SK-N-SH (cell line): ENCODE measurements at regions of chr5 and their contacts with region 1.

Region 1: GRCh38 chr5:93607367-93608258 is 24.6 kb downstream of the NR2F1 start:
- DNase-seq: peak; percentile 64
- H3K4me3 ChIP-seq: peak overlapping the region in 1 of 2 experiments; percentile 26; a peak in 2 of 4 replicates
- H3K27ac ChIP-seq: peak overlapping the region in 1 of 2 experiments; percentile 48; a peak in 2 of 4 replicates
- H3K4me1 ChIP-seq: peaks cover 0 to 14% of the 10 kb centered on the region in 2 experiments; a peak in 3 of 4 replicates
- H3K27me3 ChIP-seq: peaks cover 6% of the 10 kb centered on the region
- CTCF ChIP-seq: peak; percentile 71
- EP300 ChIP-seq: no peak
- RAD21 ChIP-seq: peak; percentile 85

Region 2: GRCh38 chr5:93257616-93258015 is 350.0 kb before region 1 on chr5:
- CTCF ChIA-PET with region 1: no interaction called
- POLR2A ChIA-PET with region 1: no interaction called
- DNase-seq: no peak
- H3K4me3 ChIP-seq: no peak overlapping the region
- H3K27ac ChIP-seq: no peak overlapping the region
- H3K4me1 ChIP-seq: no peaks in the 10 kb centered on the region; a peak in 1 of 4 replicates
- H3K27me3 ChIP-seq: no peaks in the 10 kb centered on the region
- CTCF ChIP-seq: no peak
- EP300 ChIP-seq: no peak
- RAD21 ChIP-seq: no peak

Region 3: DNA sequence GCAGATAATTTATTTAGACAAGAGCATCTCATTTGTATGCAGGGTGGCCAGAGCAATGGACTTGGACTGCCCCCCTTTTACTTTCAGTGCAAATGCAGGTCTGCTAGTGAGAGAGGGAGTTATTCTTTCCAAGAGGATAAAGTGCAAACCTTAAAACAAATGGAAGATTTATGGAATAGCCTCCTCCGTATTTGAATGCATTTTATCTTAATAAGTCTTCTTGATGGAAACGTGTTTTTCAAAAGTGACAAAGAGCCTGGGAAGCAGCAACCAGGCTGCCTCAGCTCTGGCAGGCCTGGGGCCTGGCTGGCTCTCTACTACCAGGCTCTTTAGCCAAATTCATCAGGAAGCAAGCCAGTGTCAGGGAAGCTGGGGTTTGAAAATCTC is 17.8 kb before region 1 on chr5:
- CTCF ChIA-PET with region 1: interaction called, 32 read pairs
- POLR2A ChIA-PET with region 1: interaction called, 4 read pairs
- DNase-seq: peak; percentile 59
- H3K4me3 ChIP-seq: peak overlapping the region in 1 of 2 experiments; percentile 34; a peak in 1 of 4 replicates
- H3K27ac ChIP-seq: peak overlapping the region; percentile 27 to 67; a peak in 3 of 4 replicates
- H3K4me1 ChIP-seq: peaks cover 0 to 24% of the 10 kb centered on the region in 2 experiments; a peak in 3 of 4 replicates
- H3K27me3 ChIP-seq: no peaks in the 10 kb centered on the region
- CTCF ChIP-seq: peak; percentile 25
- EP300 ChIP-seq: no peak
- RAD21 ChIP-seq: peak; percentile 41; the same call in 1 of the 2 replicates

Region 4: GRCh38 chr5:93644760-93645159 is 37.1 kb after region 1 on chr5:
- CTCF ChIA-PET with region 1: no interaction called
- POLR2A ChIA-PET with region 1: no interaction called
- DNase-seq: no peak
- H3K4me3 ChIP-seq: no peak overlapping the region
- H3K27ac ChIP-seq: no peak overlapping the region
- H3K4me1 ChIP-seq: no peaks in the 10 kb centered on the region; a peak in 1 of 4 replicates
- H3K27me3 ChIP-seq: no peaks in the 10 kb centered on the region
- CTCF ChIP-seq: no peak
- EP300 ChIP-seq: no peak
- RAD21 ChIP-seq: no peak

Region 5: DNA sequence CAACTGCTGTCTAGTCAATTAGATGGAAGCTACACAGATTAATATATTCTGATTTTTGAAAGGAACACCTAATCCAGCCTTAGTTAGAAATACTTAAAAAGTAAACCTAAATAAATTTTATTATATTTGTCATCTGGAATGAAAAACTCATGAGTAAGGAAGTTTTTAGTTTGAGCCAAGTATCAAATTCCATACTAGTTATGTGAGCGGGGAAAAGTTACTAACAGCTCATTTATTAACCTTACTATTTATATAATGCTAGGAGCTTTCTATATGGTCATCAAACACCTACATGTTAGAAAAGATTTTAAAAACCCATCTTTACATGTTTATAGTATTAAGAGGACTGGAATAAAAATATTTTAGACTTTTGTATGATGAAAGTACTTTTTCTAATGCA is 175.4 kb after region 1 on chr5:
- CTCF ChIA-PET with region 1: interaction called, 11 read pairs
- POLR2A ChIA-PET with region 1: no interaction called
- DNase-seq: no peak
- H3K4me3 ChIP-seq: no peak overlapping the region
- H3K27ac ChIP-seq: no peak overlapping the region
- H3K4me1 ChIP-seq: no peaks in the 10 kb centered on the region; a peak in 1 of 4 replicates
- H3K27me3 ChIP-seq: no peaks in the 10 kb centered on the region
- CTCF ChIP-seq: no peak
- EP300 ChIP-seq: no peak
- RAD21 ChIP-seq: no peak

Region 6: GRCh38 chr5:94849821-94850736 is 1242.5 kb after region 1 on chr5:
- CTCF ChIA-PET with region 1: interaction called, 10 read pairs
- POLR2A ChIA-PET with region 1: no interaction called
- DNase-seq: peak; percentile 39
- H3K4me3 ChIP-seq: no peak overlapping the region
- H3K27ac ChIP-seq: no peak overlapping the region
- H3K4me1 ChIP-seq: peaks cover 0 to 2% of the 10 kb centered on the region in 2 experiments; a peak in 2 of 4 replicates
- H3K27me3 ChIP-seq: no peaks in the 10 kb centered on the region
- CTCF ChIP-seq: peak; percentile 77
- EP300 ChIP-seq: peak in 1 of 2 experiments; percentile 17; a peak in 1 of 4 replicates
- RAD21 ChIP-seq: peak; percentile 97